GM12878 (cell line): ENCODE measurements at regions of chr20 and their contacts with region 1.

Region 1: GRCh38 chr20:56453352-56453751 is 15.1 kb upstream of the RTF2 start:
- DNase-seq: no peak
- ATAC-seq: peak; percentile 89
- H3K4me3 ChIP-seq: peak overlapping the region; percentile 31; the same call in 1 of the 2 replicates
- H3K27ac ChIP-seq: peak overlapping the region; percentile 65
- H3K4me1 ChIP-seq: peaks cover 23% of the 10 kb centered on the region
- H3K27me3 ChIP-seq: no peaks in the 10 kb centered on the region
- CTCF ChIP-seq: no peak
- EP300 ChIP-seq: no peak
- POLR2A ChIP-seq: no peak
- RAD21 ChIP-seq: no peak

Region 2: GRCh38 chr20:56439771-56440291 is 13.5 kb before region 1 on chr20:
- CTCF ChIA-PET with region 1: interaction called, 4 read pairs
- POLR2A ChIA-PET with region 1: interaction called, 20 read pairs
- RAD21 ChIA-PET with region 1: interaction called, 3 read pairs
- SMC1A ChIA-PET with region 1: interaction called, 21 read pairs
- in situ Hi-C with region 1: no loop called
- intact Hi-C with region 1: no loop called
- DNase-seq: no peak
- ATAC-seq: peak; percentile 14; the same call in 2 of the 3 replicates
- H3K4me3 ChIP-seq: no peak overlapping the region
- H3K27ac ChIP-seq: no peak overlapping the region
- H3K4me1 ChIP-seq: peaks cover 20% of the 10 kb centered on the region
- H3K27me3 ChIP-seq: no peaks in the 10 kb centered on the region
- CTCF ChIP-seq: no peak
- EP300 ChIP-seq: no peak
- POLR2A ChIP-seq: no peak
- RAD21 ChIP-seq: no peak

Region 3: GRCh38 chr20:56463428-56463827 is 10.1 kb after region 1 on chr20:
- CTCF ChIA-PET with region 1: interaction called, 11 read pairs
- POLR2A ChIA-PET with region 1: interaction called, 4 read pairs
- RAD21 ChIA-PET with region 1: interaction called, 10 read pairs
- SMC1A ChIA-PET with region 1: interaction called, 13 read pairs
- in situ Hi-C with region 1: no loop called
- intact Hi-C with region 1: no loop called
- DNase-seq: no peak
- ATAC-seq: no peak
- H3K4me3 ChIP-seq: no peak overlapping the region
- H3K27ac ChIP-seq: no peak overlapping the region
- H3K4me1 ChIP-seq: peaks cover 11% of the 10 kb centered on the region
- H3K27me3 ChIP-seq: no peaks in the 10 kb centered on the region
- CTCF ChIP-seq: no peak
- EP300 ChIP-seq: no peak
- POLR2A ChIP-seq: no peak
- RAD21 ChIP-seq: no peak

Region 4: DNA sequence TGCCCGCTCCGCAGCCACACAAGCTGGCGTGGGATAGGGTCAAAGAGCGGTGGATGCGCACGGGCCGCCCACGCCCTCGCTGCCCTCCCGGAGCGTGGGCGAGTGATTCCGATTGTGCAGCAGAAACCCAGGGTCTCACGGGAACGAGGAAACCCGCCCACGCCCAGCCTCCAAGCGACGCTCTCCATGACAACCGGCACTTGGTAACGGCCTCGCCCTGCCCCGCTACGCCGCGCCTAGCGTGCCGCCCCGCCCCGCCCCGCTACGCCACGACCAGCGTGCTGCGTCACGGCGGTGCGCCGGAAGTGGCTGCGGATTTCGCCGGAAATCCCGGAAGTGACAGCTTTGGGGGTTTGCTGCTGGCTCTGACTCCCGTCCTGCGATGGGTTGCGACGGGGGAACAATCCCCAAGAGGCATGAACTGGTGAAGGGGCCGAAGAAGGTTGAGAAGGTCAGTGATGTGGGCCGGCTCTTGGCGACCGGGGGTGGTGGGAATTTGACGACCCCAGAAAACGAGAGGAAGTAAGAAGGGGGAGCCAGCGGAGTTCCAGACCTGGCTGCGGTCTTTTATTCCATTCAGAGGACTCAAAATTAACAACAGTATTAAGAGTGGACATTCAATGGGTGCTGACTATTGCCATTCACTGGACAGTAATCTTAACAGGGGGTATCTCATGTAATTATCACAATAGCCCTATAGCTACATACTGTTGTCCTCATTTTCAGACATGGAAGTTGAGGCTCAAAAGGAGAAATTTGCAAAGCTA is 15.1 kb after region 1 on chr20 and contains the start of gene RTF2:
- CTCF ChIA-PET with region 1: interaction called, 11 read pairs
- POLR2A ChIA-PET with region 1: interaction called, 4 read pairs
- RAD21 ChIA-PET with region 1: interaction called, 10 read pairs
- SMC1A ChIA-PET with region 1: interaction called, 13 read pairs
- in situ Hi-C with region 1: no loop called
- intact Hi-C with region 1: no loop called
- DNase-seq: peak; percentile 86
- ATAC-seq: peak; percentile 98
- H3K4me3 ChIP-seq: peak within 1 kb of the TSS; percentile 90
- H3K27ac ChIP-seq: peak within 1 kb of the TSS; percentile 85
- H3K4me1 ChIP-seq: peaks cover 14% of the 10 kb centered on the region
- H3K27me3 ChIP-seq: no peaks in the 10 kb centered on the region
- CTCF ChIP-seq: no peak
- EP300 ChIP-seq: peak; percentile 12 to 65; a peak in 1 of 4 replicates
- POLR2A ChIP-seq: peak; percentile 93
- RAD21 ChIP-seq: no peak
- polyA plus RNA-seq, gene RTF2: 99.3 to 133 TPM